ENCODE measurements at regions of chr15 and their contacts with region 1.

Region 1: GRCh38 chr15:35078221-35078915 is 6.7 kb downstream of the NANOGP8 start:
- DNase-seq: peak; percentile 59
- ATAC-seq: peak; percentile 63
- H3K4me3 Mint-ChIP-seq: no peak overlapping the region
- H3K27ac Mint-ChIP-seq: no peak overlapping the region
- H3K4me1 Mint-ChIP-seq: no peaks in the 10 kb centered on the region
- H3K27me3 Mint-ChIP-seq: peaks cover 7% of the 10 kb centered on the region

Region 2: DNA sequence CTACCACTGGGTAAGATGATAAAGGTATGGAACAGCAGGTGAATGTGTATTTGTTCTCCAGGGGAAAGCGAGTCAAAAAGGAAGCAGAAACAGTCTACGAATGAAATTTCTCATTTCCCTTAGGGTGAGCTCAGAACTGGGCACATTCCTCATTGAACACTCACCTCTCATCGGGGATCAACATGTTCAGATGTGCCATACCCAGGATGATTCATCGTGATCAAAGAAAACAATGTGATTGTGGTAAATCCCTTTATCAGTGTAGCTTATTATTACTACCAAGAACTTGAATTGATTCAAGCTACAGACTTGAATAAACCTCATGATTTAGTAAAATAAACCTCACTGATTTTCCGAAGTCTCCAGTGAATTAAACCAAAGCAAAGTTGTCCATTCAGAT is 395.7 kb before region 1 on chr15:
- CTCF ChIA-PET with region 1: no interaction called
- POLR2A ChIA-PET with region 1: no interaction called
- intact Hi-C with region 1: no loop called
- DNase-seq: no peak
- ATAC-seq: no peak
- H3K4me3 Mint-ChIP-seq: no peak overlapping the region
- H3K27ac Mint-ChIP-seq: no peak overlapping the region
- H3K4me1 Mint-ChIP-seq: no peaks in the 10 kb centered on the region
- H3K27me3 Mint-ChIP-seq: peaks cover 13% of the 10 kb centered on the region

Region 3: DNA sequence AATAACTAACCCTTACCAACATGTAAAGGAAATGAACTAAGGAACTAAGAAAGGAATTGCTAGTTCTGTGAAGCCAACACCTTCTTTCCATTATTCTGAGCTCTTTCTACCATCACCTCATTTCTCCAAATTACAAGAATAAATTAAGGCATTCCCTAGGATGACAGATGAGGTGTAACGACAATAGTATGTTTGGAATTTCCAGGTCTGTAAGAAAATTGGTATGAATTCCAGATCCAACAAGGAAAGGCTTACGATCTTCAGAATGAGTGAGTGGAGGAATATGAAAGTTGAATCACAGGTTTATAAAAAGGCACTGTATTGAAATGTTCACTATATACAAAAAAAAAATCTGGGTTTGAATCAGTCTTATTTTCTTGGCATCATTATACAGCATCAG is 11.2 kb after region 1 on chr15:
- CTCF ChIA-PET with region 1: interaction called, 17 read pairs
- POLR2A ChIA-PET with region 1: no interaction called
- intact Hi-C with region 1: no loop called
- DNase-seq: no peak
- ATAC-seq: no peak
- H3K4me3 Mint-ChIP-seq: no peak overlapping the region
- H3K27ac Mint-ChIP-seq: no peak overlapping the region
- H3K4me1 Mint-ChIP-seq: no peaks in the 10 kb centered on the region
- H3K27me3 Mint-ChIP-seq: no peaks in the 10 kb centered on the region

Region 4: GRCh38 chr15:35115155-35115725 is 36.9 kb after region 1 on chr15:
- CTCF ChIA-PET with region 1: no interaction called
- POLR2A ChIA-PET with region 1: no interaction called
- intact Hi-C with region 1: no loop called
- DNase-seq: no peak
- ATAC-seq: no peak
- H3K4me3 Mint-ChIP-seq: no peak overlapping the region
- H3K27ac Mint-ChIP-seq: no peak overlapping the region
- H3K4me1 Mint-ChIP-seq: no peaks in the 10 kb centered on the region
- H3K27me3 Mint-ChIP-seq: no peaks in the 10 kb centered on the region

Region 5: GRCh38 chr15:35206060-35206675 is 127.8 kb after region 1 on chr15:
- CTCF ChIA-PET with region 1: interaction called, 3 read pairs
- POLR2A ChIA-PET with region 1: no interaction called
- intact Hi-C with region 1: loop called (anchors 2 to 5 kb)
- DNase-seq: peak; percentile 18
- ATAC-seq: peak; percentile 42
- H3K4me3 Mint-ChIP-seq: no peak overlapping the region
- H3K27ac Mint-ChIP-seq: no peak overlapping the region
- H3K4me1 Mint-ChIP-seq: no peaks in the 10 kb centered on the region
- H3K27me3 Mint-ChIP-seq: no peaks in the 10 kb centered on the region